Mammary epithelial cell (primary cell): ENCODE measurements at regions of chr22 and their contacts with region 1.

Region 1: GRCh38 chr22:36439481-36440271 is 41.8 kb downstream of the TXN2 start:
- DNase-seq: peak; percentile 83
- H3K4me3 ChIP-seq: no peak overlapping the region
- H3K27ac ChIP-seq: no peak overlapping the region
- H3K4me1 ChIP-seq: peaks cover 39% of the 10 kb centered on the region
- H3K27me3 ChIP-seq: no peaks in the 10 kb centered on the region
- CTCF ChIP-seq: no peak

Region 2: DNA sequence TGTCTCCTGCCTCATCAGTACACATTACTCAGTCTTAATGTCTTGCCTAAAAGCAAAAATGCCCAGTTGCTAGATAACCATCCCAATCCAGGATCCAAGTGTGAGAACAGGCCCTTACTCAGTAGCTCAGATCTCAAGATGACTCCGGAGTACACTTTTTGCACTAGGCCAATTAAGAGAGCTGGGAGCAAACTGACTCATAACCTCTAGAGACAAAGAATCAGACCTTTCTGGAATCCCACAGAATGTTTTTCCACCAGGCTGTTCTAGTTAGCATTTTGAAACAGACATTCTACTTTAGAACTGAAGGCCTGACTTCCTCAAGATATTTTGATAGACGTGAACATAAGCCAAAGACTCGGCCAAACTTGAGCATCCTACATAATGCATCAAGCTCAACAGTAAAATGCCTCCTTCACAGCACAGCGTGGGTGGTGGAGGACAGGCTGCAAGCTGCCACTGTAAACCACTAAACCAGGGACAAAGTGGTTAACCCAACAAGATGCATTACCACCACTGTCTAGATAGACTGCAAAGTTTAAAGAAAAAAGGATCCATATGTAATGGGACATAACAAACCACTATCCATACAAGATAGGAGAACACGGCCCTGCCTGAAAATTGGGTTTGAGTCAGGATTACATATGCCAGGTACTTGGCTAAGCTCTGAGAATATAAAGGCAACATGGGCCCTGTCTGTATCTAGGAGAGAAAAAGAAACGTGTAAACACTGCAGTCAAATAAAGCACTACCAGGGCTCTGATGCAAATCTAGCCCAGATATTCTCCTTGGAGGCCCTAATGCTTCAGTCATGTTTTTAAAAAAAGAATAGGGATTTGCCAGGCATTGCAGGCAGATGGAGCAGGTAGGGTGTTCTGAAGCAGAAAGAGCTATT is 100.3 kb before region 1 on chr22:
- CTCF ChIA-PET with region 1: no interaction called
- dilution Hi-C with region 1: loop called (anchors 5 kb)
- in situ Hi-C with region 1: no loop called
- intact Hi-C with region 1: no loop called
- DNase-seq: peak; percentile 73
- H3K4me3 ChIP-seq: no peak overlapping the region
- H3K27ac ChIP-seq: peak overlapping the region; percentile 53
- H3K4me1 ChIP-seq: peaks cover 78% of the 10 kb centered on the region
- H3K27me3 ChIP-seq: no peaks in the 10 kb centered on the region
- CTCF ChIP-seq: no peak

Region 3: DNA sequence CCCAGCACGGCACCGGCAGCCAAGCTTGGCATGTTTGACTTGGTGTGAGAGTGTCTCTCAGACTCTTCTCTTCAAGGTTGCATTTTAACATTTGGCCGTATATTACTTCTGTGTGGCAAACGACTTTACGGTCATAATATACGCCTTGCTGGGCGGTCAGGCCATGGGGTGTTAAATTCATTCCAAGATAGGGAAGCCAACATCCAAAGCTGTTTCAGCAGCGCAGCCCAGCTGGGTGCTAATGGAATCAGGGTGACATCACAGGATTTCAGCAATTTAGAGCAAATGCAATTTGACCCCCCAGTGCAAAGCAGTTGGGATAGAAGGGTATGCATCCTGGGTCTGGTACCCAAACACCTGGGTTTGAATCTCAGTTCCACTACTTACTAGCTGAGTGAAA is 35.2 kb before region 1 on chr22:
- CTCF ChIA-PET with region 1: no interaction called
- dilution Hi-C with region 1: loop called (anchors 5 kb)
- in situ Hi-C with region 1: no loop called
- intact Hi-C with region 1: no loop called
- DNase-seq: no peak
- H3K4me3 ChIP-seq: no peak overlapping the region
- H3K27ac ChIP-seq: no peak overlapping the region
- H3K4me1 ChIP-seq: peaks cover 16% of the 10 kb centered on the region
- H3K27me3 ChIP-seq: no peaks in the 10 kb centered on the region
- CTCF ChIP-seq: no peak

Region 4: GRCh38 chr22:36510966-36511881 is 71.5 kb after region 1 on chr22:
- CTCF ChIA-PET with region 1: no interaction called
- dilution Hi-C with region 1: loop called (anchors 10 kb)
- in situ Hi-C with region 1: no loop called
- intact Hi-C with region 1: no loop called
- DNase-seq: peak; percentile 21
- H3K4me3 ChIP-seq: no peak overlapping the region
- H3K27ac ChIP-seq: no peak overlapping the region
- H3K4me1 ChIP-seq: peaks cover 12% of the 10 kb centered on the region
- H3K27me3 ChIP-seq: no peaks in the 10 kb centered on the region
- CTCF ChIP-seq: peak; percentile 67 to 68